ENCODE measurements at regions of chr7 and their contacts with region 1.

Region 1: GRCh38 chr7:69796416-69796815 is 198.1 kb downstream of the AUTS2 start:
- DNase-seq: no peak
- H3K4me3 ChIP-seq: no peak overlapping the region
- H3K27ac ChIP-seq: no peak overlapping the region
- H3K4me1 ChIP-seq: peaks cover 58% of the 10 kb centered on the region
- CTCF ChIP-seq: no peak

Region 2: DNA sequence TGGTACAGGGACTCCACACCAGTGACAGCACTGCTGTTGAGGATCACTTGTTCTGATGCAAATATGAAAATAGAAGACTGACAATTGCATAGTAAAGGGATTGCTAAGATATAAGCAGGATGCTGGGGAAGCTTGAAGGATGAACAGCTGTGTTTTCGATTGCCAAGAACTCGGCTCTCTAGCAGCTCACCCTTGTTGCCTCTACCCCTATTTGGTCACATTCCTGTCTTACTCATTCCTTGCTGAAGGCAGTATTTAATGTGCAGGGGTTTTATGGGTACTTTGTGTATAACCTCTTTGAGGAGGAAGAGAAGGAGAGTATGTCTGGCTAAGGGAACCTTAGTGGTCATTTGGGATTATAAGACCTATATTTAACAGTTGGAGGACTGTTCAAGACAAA is 20.7 kb after region 1 on chr7:
- CTCF ChIA-PET with region 1: no interaction called
- POLR2A ChIA-PET with region 1: interaction called, 17 read pairs
- intact Hi-C with region 1: no loop called
- DNase-seq: no peak
- H3K4me3 ChIP-seq: no peak overlapping the region
- H3K27ac ChIP-seq: no peak overlapping the region
- H3K4me1 ChIP-seq: peaks cover 76% of the 10 kb centered on the region
- CTCF ChIP-seq: no peak

Measured in OCI-LY7 (cell line).